A549 (cell line): ENCODE measurements at regions of chr2 and their contacts with region 1.

Region 1: GRCh38 chr2:55050133-55050994 is at the start of gene RTN4:
- DNase-seq: peak; percentile 97 to 100
- ATAC-seq: peak; percentile 77 to 86
- H3K4me3 ChIP-seq: peak within 1 kb of the TSS; percentile 95
- H3K27ac ChIP-seq: peak within 1 kb of the TSS; percentile 94 to 97
- H3K4me1 ChIP-seq: peaks cover 38% of the 10 kb centered on the region
- CTCF ChIP-seq: no peak
- EP300 ChIP-seq: no peak; a peak in 1 of 5 replicates
- POLR2A ChIP-seq: peak; percentile 99
- RAD21 ChIP-seq: 0 out of 5 replicates have a peak, but pooled peaks of 1 of the 2 experiments have one; percentile 16
- polyA plus RNA-seq, gene RTN4: 302 and 336 TPM in 2 replicates

Region 2: DNA sequence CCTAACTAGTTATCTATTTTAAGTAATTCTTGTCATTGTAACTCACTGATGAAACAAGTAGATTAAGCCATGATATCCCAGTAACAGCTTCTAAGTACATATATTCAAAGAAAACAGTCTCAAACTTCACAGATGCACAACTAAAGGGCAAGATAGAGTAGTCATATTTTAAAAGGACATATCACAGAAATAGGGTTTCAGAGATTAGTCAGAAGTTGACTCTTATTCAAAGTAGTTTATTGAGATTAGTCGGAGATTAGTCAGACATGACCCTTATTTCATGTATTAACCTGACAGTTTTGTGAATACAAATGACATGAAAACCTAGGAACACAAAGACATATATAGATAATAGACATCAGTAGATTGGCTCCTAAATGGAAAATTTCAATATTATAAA is 1298.6 kb before region 1 on chr2:
- CTCF ChIA-PET with region 1: no interaction called
- POLR2A ChIA-PET with region 1: no interaction called
- DNase-seq: no peak
- ATAC-seq: no peak
- H3K4me3 ChIP-seq: no peak overlapping the region
- H3K27ac ChIP-seq: no peak overlapping the region
- H3K4me1 ChIP-seq: peaks cover 11% of the 10 kb centered on the region; the same call in 2 of the 3 replicates
- CTCF ChIP-seq: no peak
- EP300 ChIP-seq: no peak
- POLR2A ChIP-seq: no peak
- RAD21 ChIP-seq: no peak

Region 3: DNA sequence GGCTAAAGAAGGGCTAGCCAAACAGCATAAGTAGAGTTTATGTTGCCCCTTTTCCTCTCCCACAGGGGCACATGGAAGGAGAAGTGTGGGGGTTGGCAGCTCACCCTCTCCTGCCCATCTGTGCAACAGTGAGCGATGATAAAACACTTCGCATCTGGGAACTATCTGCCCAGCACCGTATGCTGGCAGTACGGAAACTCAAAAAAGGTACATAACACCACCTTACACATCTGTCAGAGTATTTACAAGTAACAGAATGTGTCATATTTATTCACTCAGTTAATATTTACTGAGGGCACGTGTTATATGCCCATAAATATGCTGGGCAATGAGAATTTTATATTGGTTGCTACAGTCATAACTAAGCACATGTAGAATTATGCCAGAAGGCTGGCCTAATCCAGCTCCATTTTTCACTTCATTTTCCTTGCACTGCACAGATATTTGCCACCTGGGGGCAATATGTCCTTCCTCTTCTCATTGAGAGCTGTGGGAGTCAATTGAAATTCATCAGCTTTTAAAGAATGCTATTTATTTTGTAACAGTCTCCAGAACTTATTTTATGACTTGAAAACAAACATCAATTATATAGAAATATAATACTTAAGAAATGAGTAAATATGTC is 150.7 kb before region 1 on chr2:
- CTCF ChIA-PET with region 1: interaction called, 30 read pairs
- POLR2A ChIA-PET with region 1: interaction called, 11 read pairs
- DNase-seq: peak; percentile 35 to 58
- ATAC-seq: peak in 1 of 2 experiments; percentile 55; a peak in 3 of 6 replicates
- H3K4me3 ChIP-seq: no peak overlapping the region
- H3K27ac ChIP-seq: no peak overlapping the region
- H3K4me1 ChIP-seq: peaks cover 17% of the 10 kb centered on the region
- CTCF ChIP-seq: peak; percentile 75
- EP300 ChIP-seq: no peak
- POLR2A ChIP-seq: no peak
- RAD21 ChIP-seq: peak; percentile 90 to 93

Region 4: DNA sequence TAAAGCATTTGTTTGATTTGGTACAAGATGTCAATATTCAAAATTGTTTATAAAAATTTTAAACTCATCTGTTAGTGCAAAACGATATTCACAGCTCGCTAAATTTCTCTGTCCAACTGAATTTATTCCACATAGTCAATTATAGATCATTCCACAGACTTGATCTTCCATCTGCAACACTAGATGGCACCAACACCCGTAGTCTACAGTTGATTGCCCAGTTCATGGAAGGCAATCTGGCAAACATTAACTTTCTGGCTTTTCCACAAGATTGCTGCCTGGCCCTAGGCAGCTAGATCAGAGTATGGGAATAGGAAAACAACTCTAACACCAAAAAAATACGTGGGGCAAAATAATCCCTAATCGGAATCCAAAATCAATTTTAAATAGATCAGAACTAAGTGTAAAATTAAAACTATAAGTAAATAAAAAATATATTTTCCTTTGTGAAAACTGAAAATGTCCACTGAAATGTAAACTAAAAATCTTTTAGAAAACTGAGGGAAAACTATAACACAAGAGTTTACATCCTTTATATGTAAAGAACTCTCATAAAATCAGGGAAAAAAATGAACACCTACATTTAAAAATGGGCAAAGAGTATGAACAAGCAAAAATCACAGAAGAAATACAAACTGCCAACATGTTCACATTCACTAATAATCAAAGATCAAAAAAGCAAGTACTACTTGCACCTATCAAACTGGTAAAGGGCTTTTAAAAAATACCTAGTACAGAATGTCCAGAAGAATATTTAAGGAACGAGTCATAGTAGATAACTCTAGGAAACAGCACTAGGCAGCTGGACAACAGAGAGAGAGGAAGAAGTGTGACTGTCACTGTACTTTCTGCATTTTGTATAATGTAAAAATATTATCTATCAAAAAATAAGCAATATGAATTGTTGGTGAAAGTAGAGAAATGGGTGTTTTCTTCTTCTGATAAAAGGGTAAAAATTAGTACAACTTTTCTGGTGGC is 35.1 kb before region 1 on chr2:
- CTCF ChIA-PET with region 1: interaction called, 64 read pairs
- POLR2A ChIA-PET with region 1: interaction called, 4 read pairs
- DNase-seq: peak; percentile 71 to 89
- ATAC-seq: peak; percentile 83 to 88
- H3K4me3 ChIP-seq: no peak overlapping the region
- H3K27ac ChIP-seq: peak overlapping the region; percentile 3 to 32; a peak in 2 of 6 replicates
- H3K4me1 ChIP-seq: peaks cover 86% of the 10 kb centered on the region
- CTCF ChIP-seq: peak; percentile 93
- EP300 ChIP-seq: no peak
- POLR2A ChIP-seq: no peak
- RAD21 ChIP-seq: peak; percentile 91 to 95

Region 5: GRCh38 chr2:55033066-55033742 is 17.2 kb before region 1 on chr2:
- CTCF ChIA-PET with region 1: interaction called, 25 read pairs
- POLR2A ChIA-PET with region 1: interaction called, 6 read pairs
- DNase-seq: no peak
- ATAC-seq: peak in 1 of 2 experiments; percentile 24; a peak in 1 of 6 replicates
- H3K4me3 ChIP-seq: no peak overlapping the region
- H3K27ac ChIP-seq: no peak overlapping the region
- H3K4me1 ChIP-seq: peaks cover 39% of the 10 kb centered on the region
- CTCF ChIP-seq: no peak
- EP300 ChIP-seq: no peak
- POLR2A ChIP-seq: no peak
- RAD21 ChIP-seq: no peak

Region 6: GRCh38 chr2:55073000-55073983 is 22.9 kb after region 1 on chr2:
- CTCF ChIA-PET with region 1: interaction called, 10 read pairs
- POLR2A ChIA-PET with region 1: interaction called, 6 read pairs
- DNase-seq: no peak
- ATAC-seq: no peak
- H3K4me3 ChIP-seq: no peak overlapping the region
- H3K27ac ChIP-seq: no peak overlapping the region
- H3K4me1 ChIP-seq: no peaks in the 10 kb centered on the region
- CTCF ChIP-seq: no peak
- EP300 ChIP-seq: no peak
- POLR2A ChIP-seq: no peak
- RAD21 ChIP-seq: no peak

Region 7: DNA sequence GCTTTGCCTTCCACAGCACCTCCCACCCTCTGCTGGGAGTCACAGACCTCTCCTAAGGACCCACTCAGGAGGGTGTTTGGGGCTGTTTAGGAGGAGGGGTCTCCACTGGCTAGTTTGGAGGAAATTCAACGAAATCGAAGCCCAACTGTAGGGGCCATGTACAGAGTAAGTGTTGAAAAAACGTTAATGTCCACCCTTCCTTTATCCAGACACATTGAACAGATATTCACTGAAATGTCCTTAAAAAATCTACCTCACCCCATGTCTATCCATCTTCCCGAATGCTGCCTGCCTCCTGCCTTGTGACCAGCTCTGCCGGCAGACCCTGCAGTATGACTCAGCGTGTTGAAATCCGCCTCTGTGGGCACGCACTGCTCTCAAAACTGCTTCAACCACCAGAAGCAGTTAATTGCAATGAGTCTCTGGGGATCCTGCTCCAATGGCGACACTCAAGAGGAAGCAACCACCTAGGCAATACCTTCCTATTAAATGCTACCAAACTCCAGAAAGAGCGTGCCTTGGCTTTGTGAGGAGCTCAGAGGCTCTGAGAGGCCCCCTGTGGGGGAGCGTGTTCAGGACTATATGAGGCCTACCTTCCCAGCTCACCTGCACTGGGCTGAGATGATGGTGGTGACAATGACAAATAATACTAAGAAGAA is 61.3 kb after region 1 on chr2:
- CTCF ChIA-PET with region 1: interaction called, 57 read pairs
- POLR2A ChIA-PET with region 1: interaction called, 41 read pairs
- DNase-seq: peak; percentile 44 to 84
- ATAC-seq: peak; percentile 74 to 75
- H3K4me3 ChIP-seq: no peak overlapping the region
- H3K27ac ChIP-seq: peak overlapping the region; percentile 92 to 93
- H3K4me1 ChIP-seq: peaks cover 94% of the 10 kb centered on the region
- CTCF ChIP-seq: no peak
- EP300 ChIP-seq: no peak
- POLR2A ChIP-seq: no peak
- RAD21 ChIP-seq: peak in 1 of 2 experiments; percentile 41; a peak in 2 of 5 replicates

Region 8: GRCh38 chr2:55175254-55176025 is 125.1 kb after region 1 on chr2:
- CTCF ChIA-PET with region 1: interaction called, 198 read pairs
- POLR2A ChIA-PET with region 1: interaction called, 11 read pairs
- DNase-seq: peak; percentile 75 to 87
- ATAC-seq: peak; percentile 90 to 95
- H3K4me3 ChIP-seq: no peak overlapping the region
- H3K27ac ChIP-seq: no peak overlapping the region
- H3K4me1 ChIP-seq: peaks cover 4% of the 10 kb centered on the region; the same call in 1 of the 3 replicates
- CTCF ChIP-seq: peak; percentile 95
- EP300 ChIP-seq: no peak
- POLR2A ChIP-seq: no peak
- RAD21 ChIP-seq: peak; percentile 95 to 98

Region 9: GRCh38 chr2:55247025-55247424 is 196.7 kb after region 1 on chr2:
- CTCF ChIA-PET with region 1: no interaction called
- POLR2A ChIA-PET with region 1: no interaction called
- DNase-seq: no peak
- ATAC-seq: no peak
- H3K4me3 ChIP-seq: no peak overlapping the region
- H3K27ac ChIP-seq: no peak overlapping the region
- H3K4me1 ChIP-seq: no peaks in the 10 kb centered on the region
- CTCF ChIP-seq: no peak
- EP300 ChIP-seq: no peak
- POLR2A ChIP-seq: no peak
- RAD21 ChIP-seq: no peak